ENCODE measurements at regions of chr1 and their contacts with region 1.

Region 1: GRCh38 chr1:30225357-30225756 is 498.0 kb downstream of the MATN1 start:
- DNase-seq: no peak
- H3K4me3 ChIP-seq: no peak overlapping the region
- H3K27ac ChIP-seq: no peak overlapping the region
- H3K4me1 ChIP-seq: no peaks in the 10 kb centered on the region
- H3K27me3 ChIP-seq: peaks cover 29% of the 10 kb centered on the region
- CTCF ChIP-seq: no peak

Region 2: GRCh38 chr1:30768830-30769718 is 543.7 kb after region 1 on chr1:
- CTCF ChIA-PET with region 1: interaction called, 11 read pairs
- POLR2A ChIA-PET with region 1: no interaction called
- intact Hi-C with region 1: no loop called
- DNase-seq: no peak
- H3K4me3 ChIP-seq: no peak overlapping the region
- H3K27ac ChIP-seq: no peak overlapping the region
- H3K4me1 ChIP-seq: no peaks in the 10 kb centered on the region
- H3K27me3 ChIP-seq: no peaks in the 10 kb centered on the region
- CTCF ChIP-seq: no peak

Measured in PC-9 (cell line).